ENCODE measurements at regions of chr1 and their contacts with region 1.

Region 1: DNA sequence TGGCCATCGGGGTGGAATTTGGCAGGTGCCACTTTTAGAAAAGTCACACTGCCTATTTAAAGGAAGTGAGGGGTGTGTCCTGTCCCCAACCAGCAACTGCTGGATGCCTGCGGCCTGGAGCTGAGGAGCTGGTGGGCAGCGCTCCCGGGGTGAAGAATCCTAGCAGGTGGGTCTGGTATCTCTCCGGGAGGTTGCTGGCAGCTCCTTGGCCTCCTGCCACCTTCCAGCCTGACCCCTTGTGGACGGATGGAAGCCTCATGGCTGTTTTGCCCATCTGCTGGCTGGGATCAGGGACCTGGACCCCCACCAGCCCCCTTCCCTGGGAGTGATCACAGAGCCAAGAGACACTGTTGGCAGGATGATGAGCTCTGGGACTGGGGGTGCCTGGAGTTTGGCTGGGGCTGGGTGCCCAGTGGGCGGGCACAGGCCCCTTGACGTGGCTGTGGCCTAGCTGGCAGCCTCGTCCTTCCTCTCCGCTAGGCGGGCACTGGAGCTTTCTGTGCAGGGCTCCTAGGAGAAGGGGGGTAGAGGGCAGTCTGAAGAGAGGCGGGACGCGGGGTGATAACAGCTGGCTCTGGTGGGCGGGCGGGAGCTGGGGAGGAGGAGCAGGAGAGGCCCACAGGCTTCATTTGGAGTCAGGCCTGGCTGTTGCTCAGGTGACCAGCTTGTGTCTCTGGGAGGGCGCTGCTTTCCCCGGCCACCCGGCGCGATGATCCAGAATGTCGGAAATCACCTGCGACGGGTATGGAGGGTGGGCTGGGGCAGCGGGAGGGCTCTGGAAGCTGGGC is at the start of gene ACOT11:
- DNase-seq: no peak
- H3K27ac ChIP-seq: peak within 1 kb of the TSS; percentile 38; the same call in 1 of the 2 replicates
- CTCF ChIP-seq: no peak; the same call in 1 of the 2 replicates

Region 2: GRCh38 chr1:54559771-54560231 is 12.0 kb after region 1 on chr1:
- CTCF ChIA-PET with region 1: interaction called, 11 read pairs
- POLR2A ChIA-PET with region 1: no interaction called
- DNase-seq: no peak
- H3K27ac ChIP-seq: no peak overlapping the region
- CTCF ChIP-seq: no peak